ENCODE measurements at regions of chr15 and their contacts with region 1.

Region 1: DNA sequence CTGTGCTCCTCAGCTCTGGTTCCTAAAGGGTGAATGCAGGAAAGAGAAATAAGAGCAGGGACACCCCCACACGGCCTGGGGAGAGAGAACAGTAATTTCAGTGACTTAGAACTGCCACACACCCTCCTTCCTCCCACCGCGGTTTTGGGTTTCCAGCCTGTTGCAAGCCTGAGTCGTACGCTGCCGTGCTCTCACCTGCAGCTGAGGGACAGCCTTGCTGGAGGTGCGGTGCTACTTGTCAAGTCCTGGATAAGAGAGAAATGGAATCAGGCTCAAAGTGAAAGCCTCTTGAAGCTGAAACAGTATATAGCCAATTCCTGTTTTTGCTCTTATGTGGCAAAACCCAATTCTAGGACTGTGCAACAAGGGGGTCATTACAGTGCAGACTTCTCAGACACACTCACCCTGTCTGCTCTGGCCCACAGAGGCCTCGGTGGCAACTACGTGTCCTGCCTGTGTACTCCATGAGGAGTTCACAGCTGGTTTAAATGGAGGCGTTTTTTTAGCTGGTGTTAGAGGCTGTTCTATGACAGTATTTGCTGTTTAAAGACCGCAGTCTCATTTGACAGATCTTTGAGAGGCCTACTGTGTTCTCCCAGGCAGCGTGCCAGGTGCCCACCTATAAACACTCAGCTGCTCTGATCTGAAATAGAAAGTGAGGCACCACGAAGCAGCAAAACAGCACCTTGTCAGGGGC is 42.9 kb downstream of the TBC1D2B start:
- DNase-seq: peak; percentile 63 to 90 (median 78)
- H3K4me3 ChIP-seq: peak overlapping the region; percentile 38
- H3K4me3 Mint-ChIP-seq: peak overlapping the region; percentile 57 to 84 (median 78)
- H3K27ac ChIP-seq: peak overlapping the region; percentile 75
- H3K27ac Mint-ChIP-seq: peak overlapping the region; percentile 73 to 99 (median 96)
- H3K4me1 ChIP-seq: peaks cover 64% of the 10 kb centered on the region
- H3K4me1 Mint-ChIP-seq: peaks cover 84 to 95% (median 88%) of the 10 kb centered on the region in 3 donors
- H3K27me3 ChIP-seq: no peaks in the 10 kb centered on the region
- H3K27me3 Mint-ChIP-seq: peaks cover 0 to 2% of the 10 kb centered on the region in 2 donors

Region 2: DNA sequence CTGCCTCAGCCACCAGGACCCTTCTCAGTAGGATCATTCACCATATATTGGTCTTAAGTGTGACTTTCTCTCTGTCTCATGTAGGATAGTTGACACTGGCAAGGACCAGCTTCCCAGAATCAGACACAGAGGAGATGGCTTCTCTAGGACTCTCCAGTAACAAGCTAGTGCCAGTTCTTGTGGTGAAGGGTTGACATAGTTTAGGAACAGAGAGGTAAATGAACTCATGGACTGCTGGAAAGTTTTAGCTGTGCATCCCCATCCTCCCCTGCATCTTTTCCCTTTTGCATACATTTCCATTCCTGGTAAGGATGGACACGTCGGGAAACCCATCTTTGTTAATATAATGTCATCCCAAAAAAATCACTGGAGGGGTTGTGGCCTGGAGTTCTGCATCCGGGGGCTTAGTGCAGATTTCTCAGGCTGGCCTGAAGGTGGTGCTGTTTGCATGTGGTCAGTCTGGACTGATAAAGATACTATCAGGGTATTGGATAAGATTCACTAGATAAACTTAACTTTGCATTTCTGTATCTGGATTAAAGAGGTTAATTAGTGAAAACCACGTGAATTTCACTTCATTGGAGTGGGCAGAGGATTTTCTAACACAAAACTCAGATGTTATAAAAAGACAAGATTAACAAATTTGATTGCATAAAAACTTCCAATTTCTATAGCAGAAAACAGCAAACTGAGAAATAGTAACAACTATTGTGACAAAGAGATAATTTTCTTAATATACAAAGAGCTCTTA is 67.9 kb before region 1 on chr15:
- CTCF ChIA-PET with region 1: interaction called, 10 read pairs
- POLR2A ChIA-PET with region 1: no interaction called
- DNase-seq: peak; percentile 30 to 67 (median 39)
- H3K4me3 ChIP-seq: no peak overlapping the region
- H3K4me3 Mint-ChIP-seq: no peak overlapping the region
- H3K27ac ChIP-seq: no peak overlapping the region
- H3K27ac Mint-ChIP-seq: no peak overlapping the region
- H3K4me1 ChIP-seq: no peaks in the 10 kb centered on the region
- H3K4me1 Mint-ChIP-seq: no peaks in the 10 kb centered on the region
- H3K27me3 ChIP-seq: no peaks in the 10 kb centered on the region
- H3K27me3 Mint-ChIP-seq: peaks cover 0 to 3% of the 10 kb centered on the region in 2 donors

Region 3: GRCh38 chr15:78049691-78050440 is 15.2 kb after region 1 on chr15:
- CTCF ChIA-PET with region 1: interaction called, 38 read pairs
- POLR2A ChIA-PET with region 1: interaction called, 32 read pairs
- DNase-seq: peak in 3 of 5 donors; percentile 33 to 66 (median 46)
- H3K4me3 ChIP-seq: peak overlapping the region; percentile 38
- H3K4me3 Mint-ChIP-seq: peak overlapping the region; percentile 6 to 87 (median 74)
- H3K27ac ChIP-seq: peak overlapping the region; percentile 75
- H3K27ac Mint-ChIP-seq: peak overlapping the region; percentile 87 to 99 (median 97)
- H3K4me1 ChIP-seq: peaks cover 96% of the 10 kb centered on the region
- H3K4me1 Mint-ChIP-seq: peaks cover 98 to 100% (median 100%) of the 10 kb centered on the region in 3 donors
- H3K27me3 ChIP-seq: no peaks in the 10 kb centered on the region
- H3K27me3 Mint-ChIP-seq: no peaks in the 10 kb centered on the region

Region 4: DNA sequence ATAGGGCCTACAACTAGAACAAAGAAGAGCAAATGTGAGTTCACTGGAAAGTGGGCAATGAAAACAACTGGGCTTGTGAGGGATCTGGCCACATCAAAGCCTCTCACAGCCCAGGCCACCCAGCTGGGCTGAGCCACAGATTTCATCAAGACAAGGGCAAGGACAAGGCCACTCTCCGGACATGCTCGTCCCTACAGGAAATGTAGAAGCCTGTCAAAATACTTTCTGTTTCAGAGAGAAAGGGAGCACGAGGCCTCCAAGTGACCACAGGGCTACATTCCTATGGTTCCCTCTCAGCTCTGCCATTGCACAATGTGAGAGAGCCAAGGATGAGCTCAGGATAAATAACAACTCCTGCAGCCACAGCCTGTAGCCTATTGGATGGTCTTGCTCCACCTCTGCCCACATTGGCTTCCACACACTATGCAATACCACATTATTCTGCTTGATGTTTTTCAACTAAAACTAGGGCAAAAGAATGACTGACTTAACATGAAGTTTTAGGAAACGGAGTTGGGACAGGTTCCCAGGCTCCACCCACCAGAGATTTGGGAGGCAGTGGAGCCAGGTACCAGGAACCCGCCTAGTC is 30.7 kb after region 1 on chr15:
- CTCF ChIA-PET with region 1: interaction called, 31 read pairs
- POLR2A ChIA-PET with region 1: interaction called, 15 read pairs
- DNase-seq: no peak
- H3K4me3 ChIP-seq: peak overlapping the region; percentile 23
- H3K4me3 Mint-ChIP-seq: no peak overlapping the region
- H3K27ac ChIP-seq: peak overlapping the region; percentile 17
- H3K27ac Mint-ChIP-seq: no peak overlapping the region
- H3K4me1 ChIP-seq: peaks cover 95% of the 10 kb centered on the region
- H3K4me1 Mint-ChIP-seq: peaks cover 2 to 9% (median 5%) of the 10 kb centered on the region in 3 donors
- H3K27me3 ChIP-seq: no peaks in the 10 kb centered on the region
- H3K27me3 Mint-ChIP-seq: peaks cover 0 to 1% of the 10 kb centered on the region in 2 donors